ENCODE measurements at regions of chr14 and their contacts with region 1.

Region 1: DNA sequence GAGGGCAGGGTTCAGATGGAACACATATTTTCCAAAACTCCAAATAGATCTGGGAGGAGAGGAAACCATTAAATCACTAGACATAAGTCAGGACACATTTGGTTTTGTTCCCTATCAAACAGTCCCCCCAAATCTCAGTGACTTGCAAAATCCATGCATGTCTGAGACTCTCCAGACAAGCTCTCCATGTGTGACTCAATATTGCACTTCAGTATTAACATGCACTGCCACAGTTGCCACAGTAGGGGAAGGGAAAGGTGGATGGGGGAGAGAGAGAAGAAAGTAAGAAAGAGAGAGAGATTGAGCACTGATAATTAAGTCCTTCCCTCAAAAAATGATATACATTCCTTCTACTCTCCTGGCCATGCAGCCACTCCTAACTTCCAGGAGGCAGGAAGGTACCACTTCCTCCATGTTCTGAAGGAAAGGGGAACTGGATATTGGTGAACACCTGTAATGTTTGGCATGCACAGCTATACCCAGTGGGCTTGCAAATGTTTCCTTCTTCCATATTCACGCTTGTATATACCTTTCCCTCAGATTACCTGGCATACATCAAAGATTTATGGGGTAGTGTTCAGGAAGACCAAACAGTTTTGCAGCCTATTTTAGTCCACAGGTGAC is 310.0 kb downstream of the ZFP36L1 start:
- DNase-seq: no peak
- ATAC-seq: no peak
- H3K4me3 Mint-ChIP-seq: no peak overlapping the region
- H3K27ac Mint-ChIP-seq: no peak overlapping the region
- H3K4me1 Mint-ChIP-seq: peaks cover 33% of the 10 kb centered on the region
- H3K27me3 Mint-ChIP-seq: no peaks in the 10 kb centered on the region

Region 2: GRCh38 chr14:68788996-68789820 is 306.3 kb after region 1 on chr14:
- POLR2A ChIA-PET with region 1: interaction called, 10 read pairs
- DNase-seq: peak; percentile 86
- ATAC-seq: peak; percentile 37
- H3K4me3 Mint-ChIP-seq: peak overlapping the region; percentile 89
- H3K27ac Mint-ChIP-seq: peak overlapping the region; percentile 100
- H3K4me1 Mint-ChIP-seq: peaks cover 58% of the 10 kb centered on the region
- H3K27me3 Mint-ChIP-seq: no peaks in the 10 kb centered on the region